ENCODE measurements at regions of chr11 and their contacts with region 1.

Region 1: DNA sequence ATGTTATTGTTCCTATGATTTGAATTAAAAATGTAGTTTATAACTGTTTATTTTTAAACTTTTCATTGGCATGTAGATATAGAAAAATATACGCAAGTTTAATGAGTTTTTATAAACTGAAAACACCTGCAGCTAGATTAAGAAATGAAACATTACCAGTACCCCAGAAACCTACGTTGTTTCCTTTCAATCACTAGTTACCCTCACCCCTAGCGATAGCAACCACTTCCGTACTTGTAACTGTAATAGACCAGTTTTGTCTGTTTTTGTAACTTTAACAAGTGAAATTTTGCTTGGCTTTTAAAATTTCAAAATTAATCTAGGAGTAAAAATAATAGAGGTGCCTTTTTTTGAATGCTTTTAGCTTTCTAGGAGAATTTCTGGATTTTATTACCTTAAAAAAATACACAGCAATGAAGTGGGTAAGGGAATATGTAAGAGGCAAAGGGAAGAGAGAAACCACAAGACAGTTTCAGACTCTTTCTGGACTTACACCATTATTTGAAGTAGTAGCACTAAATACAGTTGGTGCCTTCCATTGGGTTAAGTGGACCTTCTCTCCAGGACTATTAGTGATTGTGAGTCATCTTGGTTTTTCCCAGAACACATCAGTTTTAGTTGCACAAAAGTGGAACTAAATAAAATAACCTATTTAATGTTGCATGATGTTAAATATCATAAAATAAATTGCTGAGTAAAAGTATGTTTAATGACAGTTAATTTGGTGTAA is 18.7 kb upstream of the NAT10 start:
- DNase-seq: no peak
- H3K4me3 ChIP-seq: no peak overlapping the region
- H3K27ac ChIP-seq: no peak overlapping the region
- H3K4me1 ChIP-seq: no peaks in the 10 kb centered on the region
- H3K27me3 ChIP-seq: no peaks in the 10 kb centered on the region
- CTCF ChIP-seq: no peak
- POLR2A ChIP-seq: no peak

Region 2: DNA sequence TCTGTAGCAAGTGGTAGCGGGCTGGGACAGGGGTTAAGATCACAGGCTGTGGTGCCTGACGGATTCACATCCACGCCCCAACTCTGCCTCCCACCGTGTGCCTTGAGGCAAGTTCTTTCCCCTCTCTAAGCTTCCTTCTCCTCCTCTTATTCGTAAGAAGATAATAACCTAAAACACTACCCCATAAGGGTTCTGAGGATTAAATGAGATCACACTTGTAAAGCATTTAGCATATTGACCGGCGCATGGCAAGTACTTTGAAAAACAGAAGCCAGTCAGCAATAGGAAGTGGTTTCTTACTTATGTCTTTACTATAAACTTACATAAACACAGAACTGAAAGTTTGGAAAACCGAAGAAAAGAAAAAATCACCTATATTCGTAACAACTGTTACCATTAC is 179.3 kb before region 1 on chr11:
- CTCF ChIA-PET with region 1: no interaction called
- POLR2A ChIA-PET with region 1: no interaction called
- dilution Hi-C with region 1: no loop called
- intact Hi-C with region 1: no loop called
- DNase-seq: no peak
- H3K4me3 ChIP-seq: no peak overlapping the region
- H3K27ac ChIP-seq: no peak overlapping the region
- H3K4me1 ChIP-seq: no peaks in the 10 kb centered on the region
- H3K27me3 ChIP-seq: peaks cover 2 to 3% of the 10 kb centered on the region in 2 experiments
- CTCF ChIP-seq: no peak
- POLR2A ChIP-seq: no peak

Region 3: GRCh38 chr11:34075178-34075820 is 11.4 kb before region 1 on chr11:
- CTCF ChIA-PET with region 1: interaction called, 16 read pairs
- POLR2A ChIA-PET with region 1: no interaction called
- dilution Hi-C with region 1: no loop called
- intact Hi-C with region 1: no loop called
- DNase-seq: peak; percentile 40
- H3K4me3 ChIP-seq: no peak overlapping the region
- H3K27ac ChIP-seq: peak overlapping the region; percentile 25
- H3K4me1 ChIP-seq: peaks cover 30% of the 10 kb centered on the region
- H3K27me3 ChIP-seq: no peaks in the 10 kb centered on the region
- CTCF ChIP-seq: no peak
- POLR2A ChIP-seq: no peak

Region 4: GRCh38 chr11:34174412-34175041 is 87.8 kb after region 1 on chr11:
- CTCF ChIA-PET with region 1: no interaction called
- POLR2A ChIA-PET with region 1: no interaction called
- dilution Hi-C with region 1: no loop called
- intact Hi-C with region 1: no loop called
- DNase-seq: peak; percentile 55
- H3K4me3 ChIP-seq: no peak overlapping the region
- H3K27ac ChIP-seq: no peak overlapping the region
- H3K4me1 ChIP-seq: peaks cover 3% of the 10 kb centered on the region
- H3K27me3 ChIP-seq: peaks cover 3 to 5% of the 10 kb centered on the region in 2 experiments
- CTCF ChIP-seq: peak; percentile 78 to 99
- POLR2A ChIP-seq: no peak

Measured in endothelial cell of umbilical vein (primary cell).